ENCODE measurements at regions of chr18 and their contacts with region 1.

Region 1: DNA sequence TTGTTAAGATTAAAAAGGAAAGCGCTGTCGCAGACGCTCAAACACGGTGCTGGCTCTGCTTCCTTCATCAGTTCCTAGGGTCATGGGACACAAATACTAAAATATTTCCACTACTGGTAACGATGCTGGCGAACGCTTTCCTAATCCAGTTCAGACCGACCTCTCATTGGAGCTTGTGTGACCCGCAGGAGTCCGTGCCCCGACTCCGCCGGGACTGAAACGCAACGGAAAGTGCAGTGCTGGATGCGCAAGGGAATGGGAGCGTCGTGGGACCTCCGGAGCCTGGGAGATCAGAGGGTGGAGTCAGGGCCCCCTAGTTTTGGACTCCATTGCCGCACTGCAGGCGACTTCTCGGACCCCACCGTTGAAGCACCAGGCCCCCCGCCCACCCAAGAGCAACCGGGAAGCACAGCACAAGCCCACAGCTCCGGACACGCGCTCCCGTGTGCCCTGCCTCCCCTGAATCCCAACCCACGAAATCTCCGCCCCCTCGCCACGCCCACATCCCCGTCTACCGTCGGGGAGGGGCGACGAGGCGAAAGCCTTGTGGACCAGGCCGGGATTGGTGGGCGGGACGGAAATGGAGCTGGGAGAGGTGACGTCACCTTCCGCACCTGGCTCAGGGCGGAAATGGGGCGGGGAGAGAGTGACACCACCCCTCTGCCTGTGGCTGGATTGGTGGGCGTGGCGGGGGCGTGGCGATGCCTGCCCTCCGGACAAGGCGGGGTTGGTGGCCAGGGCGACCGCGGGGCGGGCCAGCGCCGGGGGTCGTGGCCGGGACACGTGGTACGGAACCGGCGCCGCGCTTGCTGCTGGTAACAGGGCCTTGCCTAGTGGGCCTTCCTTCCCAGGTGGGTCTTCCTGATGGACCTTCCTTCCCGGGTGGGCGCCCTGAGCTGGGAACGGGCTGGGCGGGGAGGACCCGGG is at the start of gene CNDP2:
- DNase-seq: peak; percentile 100
- H3K4me3 Mint-ChIP-seq: peak within 1 kb of the TSS; percentile 90
- H3K27ac Mint-ChIP-seq: peak within 1 kb of the TSS; percentile 100
- H3K4me1 Mint-ChIP-seq: peaks cover 42% of the 10 kb centered on the region
- H3K27me3 Mint-ChIP-seq: peaks cover 12% of the 10 kb centered on the region
- total RNA-seq, gene CNDP2: 160 and 177 TPM in 2 replicates

Region 2: GRCh38 chr18:74147779-74148542 is 347.9 kb before region 1 on chr18 and contains the starts of genes FBXO15 and TIMM21:
- intact Hi-C with region 1: loop called (anchors 1 kb)
- DNase-seq: peak; percentile 99
- H3K4me3 Mint-ChIP-seq: peak within 1 kb of the TSS; percentile 98
- H3K27ac Mint-ChIP-seq: peak within 1 kb of the TSS; percentile 97
- H3K4me1 Mint-ChIP-seq: peaks cover 50% of the 10 kb centered on the region
- H3K27me3 Mint-ChIP-seq: peaks cover 5% of the 10 kb centered on the region
- total RNA-seq, gene FBXO15: 1.2 and 1.3 TPM in 2 replicates
- total RNA-seq, gene TIMM21: 61.8 and 71.8 TPM in 2 replicates

Region 3: DNA sequence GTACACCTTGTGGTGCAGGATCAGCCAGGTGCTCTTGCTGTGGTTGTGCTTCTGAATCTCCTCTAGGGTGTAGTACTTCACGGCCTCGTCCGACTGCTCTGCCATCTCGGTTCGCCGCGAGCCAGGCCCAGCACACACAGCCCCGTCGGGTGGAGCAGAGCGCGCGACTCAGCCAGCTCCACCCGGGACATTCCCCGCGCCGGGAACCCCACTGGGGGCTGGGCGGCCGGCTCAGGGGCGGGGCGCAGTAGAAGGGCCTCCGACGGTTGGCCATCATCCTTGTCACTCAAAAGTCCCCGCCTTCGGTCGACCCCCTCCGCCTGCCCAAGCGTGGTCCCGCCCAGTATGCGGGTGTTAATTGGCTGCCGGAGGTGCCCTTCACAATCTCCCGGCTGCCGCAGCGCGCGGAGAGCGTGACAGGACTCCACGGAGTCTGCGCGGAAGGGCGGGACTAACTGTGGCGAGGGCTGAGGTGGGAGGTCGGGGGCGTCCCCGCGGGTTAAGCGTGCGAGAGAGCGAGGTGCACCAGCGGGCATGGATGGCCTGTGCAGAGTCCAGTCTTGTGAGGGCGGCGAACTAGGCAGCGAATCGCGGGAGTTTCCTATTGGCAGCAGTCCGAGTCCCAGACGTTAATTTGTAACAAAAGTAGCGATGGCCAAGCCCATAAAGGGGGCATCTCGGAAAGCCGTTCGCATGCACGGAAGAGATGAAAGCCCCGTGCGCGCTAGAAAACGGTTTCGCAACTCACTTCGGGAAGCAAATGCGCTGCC is 203.9 kb before region 1 on chr18 and contains the start of gene CYB5A:
- intact Hi-C with region 1: loop called (anchors 1 kb)
- DNase-seq: peak; percentile 99
- H3K4me3 Mint-ChIP-seq: no peak within 1 kb of the TSS
- H3K27ac Mint-ChIP-seq: peak within 1 kb of the TSS; percentile 88
- H3K4me1 Mint-ChIP-seq: peaks cover 9% of the 10 kb centered on the region
- H3K27me3 Mint-ChIP-seq: peaks cover 13% of the 10 kb centered on the region
- total RNA-seq, gene CYB5A: 34.8 and 40.7 TPM in 2 replicates

Region 4: DNA sequence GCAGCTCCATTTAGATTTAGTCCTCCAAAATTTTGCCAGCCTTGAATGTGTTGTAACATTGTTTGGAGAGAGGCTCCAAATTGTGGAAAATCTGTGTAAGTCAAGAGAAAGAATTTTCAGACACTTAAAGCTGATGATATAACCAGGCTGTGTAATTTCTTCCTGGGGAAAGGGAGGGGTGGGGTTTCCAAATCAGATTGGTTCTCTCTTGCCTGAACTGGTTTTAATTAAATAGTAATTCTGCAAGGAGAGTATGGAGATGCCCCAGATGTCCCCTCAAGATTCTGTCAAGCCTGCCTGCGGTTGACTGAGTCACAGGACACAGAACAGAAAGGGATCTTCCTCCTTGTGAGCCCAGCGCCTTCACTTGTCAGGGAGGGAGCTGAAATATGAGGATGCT is 125.7 kb before region 1 on chr18:
- intact Hi-C with region 1: loop called (anchors 5 kb)
- DNase-seq: peak; percentile 49
- H3K4me3 Mint-ChIP-seq: no peak overlapping the region
- H3K27ac Mint-ChIP-seq: no peak overlapping the region
- H3K4me1 Mint-ChIP-seq: peaks cover 29% of the 10 kb centered on the region
- H3K27me3 Mint-ChIP-seq: peaks cover 25% of the 10 kb centered on the region

Region 5: GRCh38 chr18:74597662-74598349 is 102.0 kb after region 1 on chr18 and contains the start of gene ZNF407:
- intact Hi-C with region 1: loop called (anchors 1 kb)
- DNase-seq: peak; percentile 97
- H3K4me3 Mint-ChIP-seq: peak within 1 kb of the TSS; percentile 97
- H3K27ac Mint-ChIP-seq: peak within 1 kb of the TSS; percentile 99
- H3K4me1 Mint-ChIP-seq: peaks cover 35% of the 10 kb centered on the region
- H3K27me3 Mint-ChIP-seq: no peaks in the 10 kb centered on the region
- total RNA-seq, gene ZNF407: 17.8 and 18.1 TPM in 2 replicates

Region 6: DNA sequence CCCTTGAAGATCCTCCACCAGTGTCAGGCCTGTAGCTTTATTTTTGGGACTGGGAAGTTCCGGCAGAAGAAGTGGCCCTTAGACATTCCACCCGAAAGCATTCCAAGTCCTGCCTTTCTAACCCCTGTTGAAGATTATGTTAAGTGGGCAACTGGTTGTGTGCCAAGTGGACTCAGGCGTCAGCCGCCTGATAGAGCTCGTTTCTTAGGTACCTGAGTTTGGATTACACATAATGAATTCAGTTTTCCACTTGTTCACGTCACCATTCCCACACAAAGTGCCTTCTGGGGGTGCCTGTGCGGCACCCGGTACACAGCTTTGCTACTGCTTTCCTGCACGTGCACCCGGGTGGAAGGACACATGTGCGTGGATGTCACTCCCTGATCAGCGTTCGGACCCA is 556.6 kb after region 1 on chr18:
- intact Hi-C with region 1: no loop called
- DNase-seq: no peak
- H3K4me3 Mint-ChIP-seq: no peak overlapping the region
- H3K27ac Mint-ChIP-seq: no peak overlapping the region
- H3K4me1 Mint-ChIP-seq: peaks cover 2% of the 10 kb centered on the region
- H3K27me3 Mint-ChIP-seq: no peaks in the 10 kb centered on the region